ENCODE measurements at regions of chr21 and their contacts with region 1.

Region 1: DNA sequence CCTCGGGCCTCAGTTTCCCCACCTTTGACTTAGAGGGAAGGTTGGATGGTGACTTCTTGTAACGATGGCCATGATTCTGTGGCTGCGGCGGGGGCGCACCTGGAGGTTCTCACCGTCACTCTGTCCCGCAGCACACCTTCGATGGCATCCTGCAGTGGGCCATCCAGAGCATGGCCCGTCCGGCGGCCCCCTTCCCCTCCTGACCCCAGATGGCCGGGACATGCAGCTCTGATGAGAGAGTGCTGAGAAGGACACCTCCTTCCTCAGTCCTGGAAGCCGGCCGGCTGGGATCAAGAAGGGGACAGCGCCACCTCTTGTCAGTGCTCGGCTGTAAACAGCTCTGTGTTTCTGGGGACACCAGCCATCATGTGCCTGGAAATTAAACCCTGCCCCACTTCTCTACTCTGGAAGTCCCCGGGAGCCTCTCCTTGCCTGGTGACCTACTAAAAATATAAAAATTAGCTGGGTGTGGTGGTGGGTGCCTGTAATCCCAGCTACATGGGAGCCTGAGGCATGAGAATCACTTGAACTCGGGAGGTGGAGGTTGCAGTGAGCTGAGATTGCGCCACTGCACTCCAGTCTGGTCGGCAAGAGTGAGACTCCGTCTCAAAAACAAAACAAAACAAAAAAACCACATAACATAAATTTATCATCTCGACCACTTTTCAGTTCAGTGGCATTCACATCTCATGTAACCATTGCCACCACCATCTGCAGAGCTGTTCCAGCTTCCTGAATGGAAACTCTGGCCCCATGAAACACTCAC is 2.1 kb upstream of the PFKL start:
- DNase-seq: peak; percentile 83
- ATAC-seq: peak; percentile 43
- H3K4me3 Mint-ChIP-seq: peak overlapping the region; percentile 5
- H3K27ac Mint-ChIP-seq: peak overlapping the region; percentile 46
- H3K4me1 Mint-ChIP-seq: peaks cover 50% of the 10 kb centered on the region
- H3K27me3 Mint-ChIP-seq: no peaks in the 10 kb centered on the region

Region 2: DNA sequence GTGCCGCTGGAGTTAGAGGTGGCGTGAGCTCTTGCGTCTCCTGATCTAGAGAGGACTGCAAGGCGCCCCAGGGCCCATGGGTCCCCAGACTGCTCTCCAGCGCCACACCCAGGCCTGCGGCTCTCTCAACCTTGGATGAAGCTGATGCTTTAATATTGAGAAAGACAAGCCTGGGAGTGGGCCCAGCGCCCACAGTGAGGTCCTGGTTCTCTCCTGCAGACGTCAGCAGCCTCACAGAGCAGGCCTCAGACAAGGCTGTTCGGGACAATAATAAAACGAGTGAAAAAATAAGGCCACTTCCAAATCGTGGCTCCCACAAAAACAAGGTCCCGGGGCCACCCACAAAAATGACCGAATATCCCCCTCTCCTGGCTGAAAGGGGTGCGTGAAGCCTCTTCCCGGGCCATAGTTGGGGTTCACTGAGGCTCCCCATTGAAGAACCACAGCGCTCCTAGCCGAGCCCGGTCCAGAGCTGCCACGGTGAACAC is 30.0 kb before region 1 on chr21:
- CTCF ChIA-PET with region 1: interaction called, 11 read pairs
- POLR2A ChIA-PET with region 1: no interaction called
- DNase-seq: no peak
- ATAC-seq: peak; percentile 27
- H3K4me3 Mint-ChIP-seq: no peak overlapping the region
- H3K27ac Mint-ChIP-seq: no peak overlapping the region
- H3K4me1 Mint-ChIP-seq: no peaks in the 10 kb centered on the region
- H3K27me3 Mint-ChIP-seq: peaks cover 2% of the 10 kb centered on the region

Region 3: DNA sequence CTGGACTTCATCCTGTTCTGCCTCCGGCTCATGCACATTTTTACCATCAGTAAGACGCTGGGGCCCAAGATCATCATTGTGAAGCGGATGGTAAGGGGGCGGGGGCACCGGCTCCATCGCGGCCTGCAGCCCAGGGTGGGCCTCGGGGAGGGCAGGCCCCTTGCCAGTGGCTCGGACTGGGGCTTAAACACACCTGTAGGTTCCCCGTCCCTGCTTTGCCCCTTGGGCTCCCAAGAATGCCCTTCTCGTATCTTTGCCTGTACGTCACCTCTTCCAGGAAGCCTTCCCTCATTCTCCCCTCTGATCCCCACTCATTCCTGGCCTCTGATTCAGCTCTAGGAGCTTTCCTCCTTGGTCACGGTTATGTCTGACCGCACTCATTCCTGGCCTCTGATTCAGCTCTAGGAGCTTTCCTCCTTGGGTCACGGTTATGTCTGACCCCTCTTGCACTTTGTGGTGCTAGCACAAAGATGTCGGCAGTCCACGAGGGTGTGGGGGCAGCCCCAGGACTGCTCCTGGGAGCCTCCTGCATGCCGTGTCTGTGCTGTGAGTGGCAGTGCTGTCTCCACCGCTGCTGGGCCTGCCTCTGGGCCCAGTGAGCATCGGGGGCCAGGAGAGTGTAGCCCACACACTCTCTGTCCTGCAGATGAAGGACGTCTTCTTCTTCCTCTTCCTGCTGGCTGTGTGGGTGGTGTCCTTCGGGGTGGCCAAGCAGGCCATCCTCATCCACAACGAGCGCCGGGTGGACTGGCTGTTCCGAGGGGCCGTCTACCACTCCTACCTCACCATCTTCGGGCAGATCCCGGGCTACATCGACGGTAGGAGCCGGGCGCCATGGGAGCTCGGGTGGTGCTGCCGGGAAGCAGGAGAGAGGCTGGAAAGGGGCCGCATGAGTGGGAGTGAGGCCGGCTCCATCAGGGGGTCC is 108.5 kb after region 1 on chr21:
- CTCF ChIA-PET with region 1: no interaction called
- POLR2A ChIA-PET with region 1: no interaction called
- DNase-seq: no peak
- ATAC-seq: no peak
- H3K4me3 Mint-ChIP-seq: no peak overlapping the region
- H3K27ac Mint-ChIP-seq: peak overlapping the region; percentile 39
- H3K4me1 Mint-ChIP-seq: peaks cover 3% of the 10 kb centered on the region
- H3K27me3 Mint-ChIP-seq: no peaks in the 10 kb centered on the region

Region 4: GRCh38 chr21:44444286-44444931 is 146.7 kb after region 1 on chr21:
- CTCF ChIA-PET with region 1: no interaction called
- POLR2A ChIA-PET with region 1: no interaction called
- DNase-seq: no peak
- ATAC-seq: no peak
- H3K4me3 Mint-ChIP-seq: no peak overlapping the region
- H3K27ac Mint-ChIP-seq: no peak overlapping the region
- H3K4me1 Mint-ChIP-seq: no peaks in the 10 kb centered on the region
- H3K27me3 Mint-ChIP-seq: peaks cover 7% of the 10 kb centered on the region

Measured in activated CD8-positive, alpha-beta T cell treated with anti-CD3 and anti-CD28 coated beads, Interleukin-2, amount 10 ng/mL, durations not matched to agents 7 days and 5 days (primary cell).